ENCODE measurements at regions of chr14 and their contacts with region 1.

Region 1: DNA sequence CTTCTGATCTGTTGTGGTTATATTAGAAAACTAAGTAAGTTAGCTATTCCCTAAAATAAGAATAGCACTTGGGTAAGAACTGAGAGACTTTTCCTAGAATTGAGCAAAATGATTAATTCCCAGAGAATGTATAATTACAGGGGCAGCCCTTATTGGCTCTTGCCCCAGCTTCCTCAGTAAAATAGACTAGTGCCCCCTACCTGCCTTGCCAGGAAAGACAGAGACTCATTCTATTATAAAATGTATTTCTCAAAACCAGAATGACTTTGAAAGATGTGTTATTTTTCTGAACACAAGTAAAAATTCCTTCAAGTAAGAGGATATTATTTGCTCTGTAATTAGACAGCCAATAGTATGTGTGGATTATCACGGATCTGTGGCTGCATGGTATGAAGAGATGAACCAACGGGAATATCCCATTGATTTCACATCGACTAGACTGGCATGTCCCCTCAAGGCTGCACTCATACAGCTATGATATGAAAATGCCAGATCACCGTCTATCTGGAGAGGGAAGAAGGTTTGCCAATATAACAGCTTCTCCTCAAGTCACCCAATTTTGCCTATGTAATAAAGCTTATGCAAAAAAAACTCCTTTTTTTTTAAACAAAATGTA is 7.4 kb upstream of the GLRX5 start:
- DNase-seq: no peak
- H3K4me3 ChIP-seq: no peak overlapping the region
- CTCF ChIP-seq: peak; percentile 64

Region 2: DNA sequence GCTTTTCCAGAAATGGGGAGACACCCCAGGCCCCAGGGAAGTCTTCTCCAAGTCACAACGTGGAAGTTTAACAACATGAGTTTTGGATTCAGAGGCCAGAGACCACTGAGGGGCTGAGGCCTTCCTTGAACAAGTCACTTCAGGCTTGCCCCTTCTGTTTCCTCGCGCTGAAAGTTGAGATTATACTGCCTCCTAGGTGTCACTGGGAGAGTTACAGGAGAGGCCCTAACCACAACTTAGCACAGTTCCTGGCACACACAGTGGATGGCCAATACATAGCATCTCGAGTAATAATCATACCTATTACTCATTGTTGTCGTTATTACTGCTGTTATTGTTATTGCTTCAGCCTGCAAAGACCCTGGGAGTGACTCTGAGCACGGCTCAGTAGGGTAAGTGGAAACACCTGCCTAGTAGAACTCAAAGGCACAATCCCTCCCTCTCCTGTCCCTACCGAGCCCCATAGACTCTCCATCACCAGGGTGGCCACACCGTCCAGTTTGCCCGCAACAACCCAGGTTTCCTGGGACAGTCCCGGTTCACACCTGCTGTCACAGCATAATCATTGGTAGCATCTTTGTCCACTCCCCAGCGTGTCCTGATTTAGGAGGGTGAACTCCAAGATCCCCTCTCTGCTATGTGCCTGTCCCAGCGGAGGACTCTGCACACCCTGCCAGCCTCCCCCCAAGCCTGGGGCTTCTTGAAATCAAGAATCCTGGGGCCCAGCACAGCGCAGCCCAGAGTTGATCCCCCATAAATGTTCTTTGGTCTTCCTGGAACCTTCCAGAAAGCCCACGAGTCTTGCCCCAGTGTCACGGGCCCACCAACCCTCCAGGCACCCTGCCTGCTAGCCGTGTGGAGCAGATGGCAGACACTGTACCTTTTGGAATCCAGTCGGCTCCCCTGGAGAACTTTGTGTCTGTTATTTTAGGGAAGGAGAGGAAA is 96.0 kb before region 1 on chr14:
- CTCF ChIA-PET with region 1: interaction called, 10 read pairs
- POLR2A ChIA-PET with region 1: interaction called, 3 read pairs
- DNase-seq: no peak
- H3K4me3 ChIP-seq: no peak overlapping the region
- CTCF ChIP-seq: peak; percentile 42

Region 3: DNA sequence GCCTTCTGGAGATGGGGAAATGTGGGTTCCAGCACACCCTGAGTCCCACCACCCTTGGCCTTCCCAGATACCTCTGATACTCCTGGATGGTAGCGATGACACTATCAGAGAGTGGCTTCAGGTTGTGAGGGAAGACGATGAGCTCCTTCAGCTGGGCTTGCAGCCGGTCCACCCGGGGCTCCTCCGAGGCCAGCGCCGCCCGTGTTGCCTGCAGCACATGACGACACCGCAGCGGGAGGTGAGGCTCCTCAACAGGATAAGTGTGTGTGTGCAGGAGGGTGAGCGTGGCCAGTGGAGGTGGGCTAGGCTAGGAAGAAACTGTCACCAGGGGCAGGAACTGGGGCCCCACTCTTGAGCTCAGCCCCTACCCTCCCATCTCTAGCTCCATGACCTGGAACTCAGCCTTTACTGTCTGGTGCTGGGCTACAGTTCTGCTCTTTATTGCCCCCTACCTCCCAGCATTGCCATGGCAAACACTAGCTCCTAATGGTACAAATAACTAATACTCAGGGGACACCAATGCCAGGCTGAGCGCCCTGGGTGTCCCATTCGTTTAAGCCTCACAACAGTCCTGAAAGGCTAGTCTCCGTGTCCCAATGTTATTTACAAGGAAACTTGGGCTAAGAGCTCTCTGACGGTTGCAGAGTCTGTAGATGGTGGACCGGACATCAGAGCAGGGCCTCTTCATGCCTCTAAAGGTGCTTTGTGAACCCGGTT is 75.2 kb before region 1 on chr14:
- CTCF ChIA-PET with region 1: interaction called, 38 read pairs
- POLR2A ChIA-PET with region 1: no interaction called
- DNase-seq: no peak
- H3K4me3 ChIP-seq: no peak overlapping the region
- CTCF ChIP-seq: peak; percentile 46

Region 4: DNA sequence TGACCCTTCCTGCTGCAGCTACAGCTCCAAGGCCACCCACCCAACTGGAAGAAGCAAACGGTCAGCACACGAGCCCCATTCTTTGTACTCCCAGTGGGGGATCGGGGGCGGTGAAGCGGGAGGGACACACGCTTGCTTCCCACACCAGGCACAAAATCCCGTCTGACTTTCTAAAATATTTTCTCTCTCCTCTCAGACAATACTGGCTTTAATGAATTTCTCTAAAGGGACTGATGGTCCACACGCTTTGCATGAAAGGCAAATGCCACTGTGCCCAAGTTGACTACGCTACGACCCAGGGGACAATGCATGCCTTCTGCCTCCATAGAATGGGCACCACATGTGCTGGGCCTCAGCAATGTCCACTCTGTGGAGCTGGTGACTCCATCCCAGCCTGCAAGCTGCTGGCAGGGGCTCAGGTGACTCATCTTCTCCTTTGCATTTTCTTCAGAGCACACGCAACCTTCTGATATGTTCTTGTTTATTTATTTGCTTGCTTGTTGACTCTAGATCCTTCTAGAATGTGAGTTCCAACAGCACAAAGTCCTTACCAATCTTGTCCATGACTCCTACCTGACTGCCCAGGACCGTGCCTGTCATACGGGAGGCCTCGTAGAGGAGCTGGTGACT is 26.6 kb before region 1 on chr14:
- CTCF ChIA-PET with region 1: interaction called, 34 read pairs
- POLR2A ChIA-PET with region 1: interaction called, 7 read pairs
- DNase-seq: no peak
- H3K4me3 ChIP-seq: no peak overlapping the region
- CTCF ChIP-seq: no peak

Region 5: DNA sequence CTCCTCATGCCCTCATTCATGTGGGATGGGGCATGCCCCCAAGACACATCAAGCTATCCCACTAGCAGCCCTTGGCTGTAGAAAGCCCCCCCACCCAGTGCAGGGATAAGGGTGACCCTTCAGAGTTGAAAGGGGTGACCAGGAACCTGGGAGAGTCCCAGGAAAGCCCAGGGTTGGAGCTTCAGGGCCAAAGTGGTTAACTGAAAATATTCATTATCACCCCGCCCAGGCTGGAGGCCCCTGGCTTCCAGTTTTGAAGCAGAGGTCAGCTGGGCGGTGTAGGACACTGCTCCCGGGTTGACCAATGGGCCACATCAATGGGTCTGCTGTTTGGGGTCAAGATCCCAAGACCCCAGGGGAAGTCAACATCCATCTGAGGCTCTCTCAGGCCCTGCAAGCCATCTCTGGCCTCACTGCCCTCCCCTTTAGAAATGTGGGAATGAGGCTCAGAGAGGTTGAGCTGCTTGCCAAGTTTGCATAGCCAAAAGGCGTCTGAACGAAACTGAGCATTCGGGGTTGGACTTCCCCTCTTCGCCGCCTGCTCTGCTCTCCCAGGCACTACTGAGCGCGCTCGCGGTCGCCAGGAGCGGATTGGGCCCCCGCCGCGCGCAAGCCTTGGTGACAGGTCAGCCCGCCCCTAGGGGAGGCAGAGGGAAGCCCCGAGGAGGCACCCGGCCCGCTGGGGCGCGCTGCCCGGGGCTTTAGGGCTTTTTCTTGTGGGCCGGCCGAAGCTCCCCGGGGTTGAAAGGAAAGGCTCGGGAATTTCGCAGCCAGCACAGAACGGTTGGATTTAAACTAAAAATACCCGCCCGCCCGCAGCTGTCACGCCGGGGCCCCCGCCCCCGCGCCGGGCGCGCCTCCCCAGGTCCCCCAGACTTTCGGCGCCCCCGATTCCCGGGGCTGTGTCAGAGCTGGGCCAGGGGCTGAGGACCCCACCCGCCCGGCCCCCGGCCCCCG is 11.6 kb before region 1 on chr14:
- CTCF ChIA-PET with region 1: interaction called, 62 read pairs
- POLR2A ChIA-PET with region 1: interaction called, 7 read pairs
- DNase-seq: no peak
- H3K4me3 ChIP-seq: peak overlapping the region; percentile 60
- CTCF ChIP-seq: peak; percentile 43

Region 6: DNA sequence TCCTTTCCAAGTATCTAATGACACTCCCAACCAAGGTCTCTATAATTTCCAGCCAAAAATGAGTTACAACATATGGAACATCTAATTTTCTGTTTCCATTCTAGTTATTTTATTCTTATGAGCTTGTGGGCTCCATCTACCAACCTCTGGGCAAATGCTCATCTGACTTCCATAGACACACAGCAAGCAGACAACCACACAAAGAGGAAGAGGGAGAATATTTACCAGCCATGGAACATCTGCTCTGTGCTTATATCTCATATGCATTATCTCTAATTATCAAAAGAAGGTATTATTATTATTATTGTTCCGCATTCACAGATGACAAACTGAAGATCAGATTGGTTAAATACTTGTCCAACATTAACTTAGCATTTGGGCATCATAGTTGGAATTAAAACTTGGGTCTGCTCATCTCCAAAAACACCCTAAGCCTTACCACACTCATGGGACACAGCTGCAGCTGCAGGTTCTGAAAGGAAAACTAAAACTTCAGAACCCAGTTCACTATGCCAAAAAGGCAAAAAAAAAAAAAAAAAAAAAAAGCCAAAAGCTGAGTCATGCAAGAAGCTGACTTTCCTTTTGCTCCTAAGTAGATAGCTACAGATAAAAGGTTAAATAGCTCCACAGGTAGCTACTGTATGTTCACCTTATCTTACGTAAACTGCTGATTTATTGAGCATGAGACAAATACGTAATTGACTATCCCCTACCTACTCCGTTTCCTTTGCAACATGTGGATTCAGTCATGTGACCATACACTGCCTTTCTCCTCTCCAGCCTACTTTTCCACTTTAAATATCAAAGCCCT is 135.1 kb after region 1 on chr14:
- CTCF ChIA-PET with region 1: no interaction called
- POLR2A ChIA-PET with region 1: no interaction called
- DNase-seq: no peak
- H3K4me3 ChIP-seq: no peak overlapping the region
- CTCF ChIP-seq: no peak

Measured in AG04449 (cell line).